ENCODE measurements at regions of chr9 and their contacts with region 1.

Region 1: DNA sequence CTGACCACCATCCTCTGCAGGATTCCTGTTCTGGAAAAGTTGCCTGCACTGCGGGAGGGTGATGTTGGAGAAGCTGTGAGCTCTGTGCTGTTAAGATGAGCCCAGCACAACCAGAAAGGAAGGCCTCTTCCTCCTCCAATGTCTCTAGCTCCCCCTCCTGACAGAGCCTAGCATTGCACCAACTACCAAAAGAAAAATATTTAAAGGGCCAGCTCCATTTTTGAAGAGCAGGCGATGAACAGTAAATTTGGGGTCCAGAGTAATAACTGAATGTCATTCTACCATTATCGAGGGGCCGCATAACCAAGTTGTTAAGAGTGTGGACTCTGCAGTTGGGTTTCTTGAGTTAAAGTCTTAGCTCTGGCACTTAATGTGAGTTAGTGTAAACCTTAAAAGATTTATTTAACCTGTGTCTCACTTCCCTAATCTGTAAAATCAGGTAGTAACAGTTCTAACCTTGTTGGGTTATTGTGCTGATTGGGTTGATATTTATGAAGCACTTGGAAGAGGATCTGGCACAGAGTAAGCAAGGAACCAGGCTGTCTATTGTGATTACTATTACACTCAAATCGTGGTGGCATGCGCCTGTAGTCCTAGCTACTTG is 3.9 kb downstream of the TEX53 start:
- DNase-seq: peak in 1 of 2 donors; percentile 84
- H3K4me3 ChIP-seq: no peak overlapping the region
- H3K27ac ChIP-seq: no peak overlapping the region
- H3K4me1 ChIP-seq: no peaks in the 10 kb centered on the region
- H3K27me3 ChIP-seq: no peaks in the 10 kb centered on the region
- CTCF ChIP-seq: peak; percentile 74 to 88 (median 77)

Region 2: GRCh38 chr9:114339130-114339908 is 314.3 kb before region 1 on chr9:
- intact Hi-C with region 1: loop called (anchors 5 kb)
- DNase-seq: no peak
- H3K4me3 ChIP-seq: no peak overlapping the region
- H3K27ac ChIP-seq: no peak overlapping the region
- H3K4me1 ChIP-seq: peaks cover 0 to 3% of the 10 kb centered on the region in 2 donors
- H3K27me3 ChIP-seq: no peaks in the 10 kb centered on the region
- CTCF ChIP-seq: peak; percentile 73 to 83 (median 75)

Region 3: GRCh38 chr9:114405294-114406034 is 248.2 kb before region 1 on chr9:
- intact Hi-C with region 1: loop called (anchors 1 kb)
- DNase-seq: peak in 1 of 2 donors; percentile 89
- H3K4me3 ChIP-seq: no peak overlapping the region
- H3K27ac ChIP-seq: no peak overlapping the region
- H3K4me1 ChIP-seq: no peaks in the 10 kb centered on the region
- H3K27me3 ChIP-seq: no peaks in the 10 kb centered on the region
- CTCF ChIP-seq: peak; percentile 78 to 87 (median 87)

Region 4: GRCh38 chr9:114487607-114488300 is 165.9 kb before region 1 on chr9:
- intact Hi-C with region 1: loop called (anchors 1 kb)
- DNase-seq: no peak
- H3K4me3 ChIP-seq: no peak overlapping the region
- H3K27ac ChIP-seq: no peak overlapping the region
- H3K4me1 ChIP-seq: no peaks in the 10 kb centered on the region
- H3K27me3 ChIP-seq: no peaks in the 10 kb centered on the region
- CTCF ChIP-seq: peak; percentile 52 to 71 (median 57)

Region 5: GRCh38 chr9:114718801-114719221 is 65.2 kb after region 1 on chr9:
- intact Hi-C with region 1: no loop called
- DNase-seq: no peak
- H3K4me3 ChIP-seq: no peak overlapping the region
- H3K27ac ChIP-seq: no peak overlapping the region
- H3K4me1 ChIP-seq: no peaks in the 10 kb centered on the region
- H3K27me3 ChIP-seq: no peaks in the 10 kb centered on the region
- CTCF ChIP-seq: no peak

Measured in ascending aorta (tissue), 2 donors.